ENCODE measurements at regions of chr6 and their contacts with region 1.

Region 1: GRCh38 chr6:13538084-13538483 is 36.3 kb upstream of the SIRT5 start:
- DNase-seq: peak in 1 of 2 donors; percentile 61
- ATAC-seq: peak in 2 of 3 donors; percentile 74 to 84
- H3K4me3 ChIP-seq: no peak overlapping the region
- H3K4me3 Mint-ChIP-seq: no peak overlapping the region
- H3K27ac ChIP-seq: no peak overlapping the region
- H3K27ac Mint-ChIP-seq: no peak overlapping the region
- H3K4me1 ChIP-seq: no peaks in the 10 kb centered on the region
- H3K4me1 Mint-ChIP-seq: no peaks in the 10 kb centered on the region
- H3K27me3 ChIP-seq: no peaks in the 10 kb centered on the region
- H3K27me3 Mint-ChIP-seq: no peaks in the 10 kb centered on the region
- CTCF ChIP-seq: peak; percentile 51

Region 2: GRCh38 chr6:13296536-13296997 is 241.5 kb before region 1 on chr6:
- intact Hi-C with region 1: no loop called
- DNase-seq: no peak
- ATAC-seq: no peak
- H3K4me3 ChIP-seq: no peak overlapping the region
- H3K4me3 Mint-ChIP-seq: no peak overlapping the region
- H3K27ac ChIP-seq: no peak overlapping the region
- H3K27ac Mint-ChIP-seq: no peak overlapping the region
- H3K4me1 ChIP-seq: no peaks in the 10 kb centered on the region
- H3K4me1 Mint-ChIP-seq: peaks cover 5 to 8% of the 10 kb centered on the region in 2 donors
- H3K27me3 ChIP-seq: no peaks in the 10 kb centered on the region
- H3K27me3 Mint-ChIP-seq: no peaks in the 10 kb centered on the region
- CTCF ChIP-seq: no peak

Region 3: DNA sequence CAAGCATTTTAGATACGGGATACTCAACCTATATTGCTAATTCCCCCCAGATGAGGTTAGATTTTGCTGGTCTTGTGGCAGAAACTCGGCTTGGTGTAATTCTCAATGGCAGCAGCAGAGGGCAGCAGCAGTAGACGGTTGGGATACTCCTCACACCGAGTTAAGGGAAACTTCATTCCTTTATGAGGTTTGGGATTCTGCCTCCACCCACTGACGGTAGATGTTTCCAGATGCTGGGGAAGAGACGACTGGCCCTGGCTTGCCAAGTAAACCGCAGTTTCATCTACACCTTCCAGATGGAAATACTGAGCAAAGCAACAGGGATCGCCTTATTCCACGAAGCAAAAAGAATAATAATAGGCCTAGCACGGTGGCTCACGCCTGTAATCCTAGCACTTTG is 201.5 kb before region 1 on chr6:
- intact Hi-C with region 1: loop called (anchors 1 kb)
- DNase-seq: peak; percentile 77 to 86
- ATAC-seq: peak; percentile 81 to 88 (median 87)
- H3K4me3 ChIP-seq: no peak overlapping the region
- H3K4me3 Mint-ChIP-seq: peak overlapping the region; percentile 1
- H3K27ac ChIP-seq: no peak overlapping the region
- H3K27ac Mint-ChIP-seq: peak overlapping the region; percentile 6 to 46
- H3K4me1 ChIP-seq: peaks cover 24% of the 10 kb centered on the region
- H3K4me1 Mint-ChIP-seq: peaks cover 23 to 25% of the 10 kb centered on the region in 2 donors
- H3K27me3 ChIP-seq: no peaks in the 10 kb centered on the region
- H3K27me3 Mint-ChIP-seq: no peaks in the 10 kb centered on the region
- CTCF ChIP-seq: peak; percentile 97

Region 4: GRCh38 chr6:13383328-13384163 is 154.5 kb before region 1 on chr6:
- intact Hi-C with region 1: loop called (anchors 1 kb)
- DNase-seq: peak; percentile 45 to 73
- ATAC-seq: peak; percentile 95 to 99 (median 98)
- H3K4me3 ChIP-seq: no peak overlapping the region
- H3K4me3 Mint-ChIP-seq: peak overlapping the region; percentile 79
- H3K27ac ChIP-seq: peak overlapping the region; percentile 90
- H3K27ac Mint-ChIP-seq: peak overlapping the region; percentile 73 to 96
- H3K4me1 ChIP-seq: peaks cover 48% of the 10 kb centered on the region
- H3K4me1 Mint-ChIP-seq: peaks cover 91 to 98% of the 10 kb centered on the region in 2 donors
- H3K27me3 ChIP-seq: no peaks in the 10 kb centered on the region
- H3K27me3 Mint-ChIP-seq: no peaks in the 10 kb centered on the region
- CTCF ChIP-seq: no peak

Region 5: GRCh38 chr6:13413900-13414555 is 124.1 kb before region 1 on chr6:
- intact Hi-C with region 1: loop called (anchors 1 kb)
- DNase-seq: peak in 1 of 2 donors; percentile 66
- ATAC-seq: peak in 2 of 3 donors; percentile 92 to 94
- H3K4me3 ChIP-seq: no peak overlapping the region
- H3K4me3 Mint-ChIP-seq: no peak overlapping the region
- H3K27ac ChIP-seq: peak overlapping the region; percentile 61
- H3K27ac Mint-ChIP-seq: peak overlapping the region; percentile 68 to 80
- H3K4me1 ChIP-seq: peaks cover 43% of the 10 kb centered on the region
- H3K4me1 Mint-ChIP-seq: peaks cover 83 to 84% of the 10 kb centered on the region in 2 donors
- H3K27me3 ChIP-seq: no peaks in the 10 kb centered on the region
- H3K27me3 Mint-ChIP-seq: no peaks in the 10 kb centered on the region
- CTCF ChIP-seq: peak; percentile 26

Region 6: DNA sequence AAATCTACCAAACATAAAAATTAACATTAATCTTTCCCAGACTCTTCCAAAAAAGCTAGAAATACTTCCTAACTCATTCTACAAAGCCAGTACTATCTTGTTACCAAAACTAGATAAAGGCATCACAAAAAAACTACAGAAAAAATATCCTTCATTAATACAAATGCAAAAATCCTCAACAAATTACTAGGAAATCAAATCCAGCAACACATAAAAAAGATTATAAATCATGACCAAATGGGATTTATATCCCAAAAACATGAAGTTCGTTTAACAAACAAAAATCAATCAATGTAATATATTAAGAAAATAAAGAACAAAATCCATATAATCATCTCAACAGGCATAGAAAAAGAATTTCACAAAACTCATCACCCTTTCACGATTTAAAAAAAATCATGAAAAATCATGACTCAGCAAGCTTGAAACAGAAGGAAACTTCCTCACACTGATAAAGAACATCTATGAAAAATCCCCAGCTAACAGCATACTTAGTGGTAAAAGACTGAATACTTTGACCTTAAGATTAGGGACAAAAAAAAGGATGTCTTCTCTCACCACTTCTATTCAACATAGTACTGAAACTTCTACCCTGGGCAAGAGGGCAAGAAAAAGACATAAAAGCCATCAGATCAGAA is 130.3 kb after region 1 on chr6:
- intact Hi-C with region 1: no loop called
- DNase-seq: peak in 1 of 2 donors; percentile 38
- ATAC-seq: peak; percentile 66 to 74 (median 67)
- H3K4me3 ChIP-seq: no peak overlapping the region
- H3K4me3 Mint-ChIP-seq: peak overlapping the region; percentile 55
- H3K27ac ChIP-seq: no peak overlapping the region
- H3K27ac Mint-ChIP-seq: peak overlapping the region; percentile 71 to 76
- H3K4me1 ChIP-seq: peaks cover 13% of the 10 kb centered on the region
- H3K4me1 Mint-ChIP-seq: peaks cover 88% of the 10 kb centered on the region in 2 donors
- H3K27me3 ChIP-seq: no peaks in the 10 kb centered on the region
- H3K27me3 Mint-ChIP-seq: no peaks in the 10 kb centered on the region
- CTCF ChIP-seq: no peak

Region 7: GRCh38 chr6:13795041-13795750 is 257.1 kb after region 1 on chr6:
- intact Hi-C with region 1: no loop called
- DNase-seq: peak; percentile 71 to 88
- ATAC-seq: peak; percentile 92 to 99 (median 98)
- H3K4me3 ChIP-seq: no peak overlapping the region
- H3K4me3 Mint-ChIP-seq: no peak overlapping the region
- H3K27ac ChIP-seq: no peak overlapping the region
- H3K27ac Mint-ChIP-seq: no peak overlapping the region
- H3K4me1 ChIP-seq: no peaks in the 10 kb centered on the region
- H3K4me1 Mint-ChIP-seq: peaks cover 0 to 8% of the 10 kb centered on the region in 2 donors
- H3K27me3 ChIP-seq: no peaks in the 10 kb centered on the region
- H3K27me3 Mint-ChIP-seq: no peaks in the 10 kb centered on the region
- CTCF ChIP-seq: peak; percentile 92

Region 8: DNA sequence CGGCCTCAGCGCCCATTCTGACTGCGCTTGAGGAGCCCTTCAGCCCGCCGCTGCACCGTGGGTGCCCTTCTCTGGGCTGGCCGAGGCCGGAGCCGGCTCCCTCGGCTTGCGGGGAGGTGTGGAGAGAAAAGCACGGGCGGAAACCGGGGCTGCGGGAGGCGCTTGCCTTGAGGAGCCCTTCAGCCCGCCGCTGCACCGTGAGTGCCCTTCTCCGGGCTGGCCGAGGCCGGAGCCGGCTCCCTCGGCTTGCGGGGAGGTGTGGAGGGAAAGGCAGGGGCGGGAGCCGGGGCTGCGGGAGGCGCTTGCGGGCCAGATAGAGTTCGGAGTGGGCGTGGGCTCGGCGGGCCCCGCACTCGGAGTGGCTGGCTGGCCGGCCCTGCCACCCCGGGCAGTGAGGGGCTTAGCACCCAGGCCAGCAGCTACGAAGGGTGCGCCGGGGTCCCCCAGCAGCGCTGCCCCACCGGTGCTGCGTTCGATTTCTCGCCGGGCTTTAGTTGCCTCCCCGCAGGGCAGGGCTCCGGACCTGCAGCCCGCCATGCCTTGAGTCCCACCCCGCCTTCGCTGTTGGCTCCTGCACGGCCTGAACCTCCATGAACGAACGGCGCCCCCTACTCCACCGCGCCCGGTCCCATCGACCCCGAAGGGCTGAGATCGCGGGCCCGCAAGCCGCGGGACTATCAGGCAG is 321.9 kb after region 1 on chr6:
- intact Hi-C with region 1: no loop called
- DNase-seq: no peak
- ATAC-seq: peak in 1 of 3 donors; percentile 32
- H3K4me3 ChIP-seq: no peak overlapping the region
- H3K4me3 Mint-ChIP-seq: no peak overlapping the region
- H3K27ac ChIP-seq: no peak overlapping the region
- H3K27ac Mint-ChIP-seq: no peak overlapping the region
- H3K4me1 ChIP-seq: peaks cover 9% of the 10 kb centered on the region
- H3K4me1 Mint-ChIP-seq: peaks cover 0 to 4% of the 10 kb centered on the region in 2 donors
- H3K27me3 ChIP-seq: peaks cover 27% of the 10 kb centered on the region
- H3K27me3 Mint-ChIP-seq: peaks cover 44 to 61% of the 10 kb centered on the region in 2 donors
- CTCF ChIP-seq: no peak